Left colon (tissue), 2 donors: ENCODE measurements at regions of chr2 and their contacts with region 1.

Region 1: GRCh38 chr2:101831351-101831865 is 133.9 kb downstream of the MAP4K4 start:
- DNase-seq: peak; percentile 55 to 75
- ATAC-seq: peak; percentile 88

Region 2: GRCh38 chr2:101341901-101342624 is 489.3 kb before region 1 on chr2:
- intact Hi-C with region 1: loop called in 1 of 2 experiments (anchors 10 kb)
- DNase-seq: peak; percentile 56 to 87
- ATAC-seq: peak; percentile 70

Region 3: GRCh38 chr2:101420623-101421022 is 410.8 kb before region 1 on chr2:
- intact Hi-C with region 1: loop called in 1 of 2 experiments (anchors 5 kb)
- DNase-seq: no peak
- ATAC-seq: no peak

Region 4: GRCh38 chr2:101518578-101519492 is 312.6 kb before region 1 on chr2:
- intact Hi-C with region 1: loop called in 1 of 2 experiments (anchors 10 kb)
- DNase-seq: peak; percentile 30 to 38
- ATAC-seq: peak; percentile 91